Esophagus muscularis mucosa (tissue), 4 donors: ENCODE measurements at regions of chr17 and their contacts with region 1.

Region 1: GRCh38 chr17:32483451-32484019 is 3.3 kb upstream of the CDK5R1 start:
- DNase-seq: no peak
- H3K4me3 ChIP-seq: no peak overlapping the region
- H3K27ac ChIP-seq: peak overlapping the region; percentile 24 to 63 (median 42)
- H3K4me1 ChIP-seq: peaks cover 32 to 48% (median 40%) of the 10 kb centered on the region in 4 donors
- H3K27me3 ChIP-seq: no peaks in the 10 kb centered on the region
- CTCF ChIP-seq: peak; percentile 35 to 61 (median 59)
- EP300 ChIP-seq: no peak
- POLR2A ChIP-seq: no peak

Region 2: DNA sequence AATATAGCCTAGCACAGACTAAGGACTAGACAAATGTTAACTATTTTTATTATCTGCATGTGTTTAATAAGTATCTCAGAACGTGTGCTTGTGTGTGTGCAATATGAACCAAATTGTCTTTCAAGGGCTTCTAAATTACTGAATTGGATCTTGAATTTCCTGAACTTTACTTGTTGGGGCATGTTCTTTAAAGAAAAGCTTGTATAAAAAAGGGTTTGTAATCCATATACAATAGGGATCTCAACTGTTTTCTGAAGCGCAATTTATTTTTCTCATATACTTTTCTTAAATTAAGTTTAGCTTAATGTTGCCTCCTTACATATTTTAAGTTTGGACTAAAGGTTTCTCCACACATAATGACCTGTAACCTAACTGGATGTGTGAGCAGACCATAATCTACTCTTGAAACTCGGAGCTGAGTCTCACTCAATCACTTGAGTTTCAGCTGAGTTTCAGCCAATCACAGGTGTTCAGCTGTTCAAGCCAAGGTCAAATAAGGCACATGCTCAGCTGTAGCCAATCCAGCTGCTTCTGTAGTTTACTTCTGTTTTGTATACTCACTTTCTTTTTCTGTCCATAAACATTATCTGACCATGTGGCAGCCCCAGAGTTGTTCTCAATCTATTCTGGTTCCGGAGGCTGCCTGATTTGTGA is 75.6 kb after region 1 on chr17:
- intact Hi-C with region 1: no loop called
- DNase-seq: no peak
- H3K4me3 ChIP-seq: no peak overlapping the region
- H3K27ac ChIP-seq: no peak overlapping the region
- H3K4me1 ChIP-seq: no peaks in the 10 kb centered on the region
- H3K27me3 ChIP-seq: no peaks in the 10 kb centered on the region
- CTCF ChIP-seq: no peak
- EP300 ChIP-seq: no peak
- POLR2A ChIP-seq: no peak

Region 3: GRCh38 chr17:32755045-32755805 is 271.7 kb after region 1 on chr17:
- intact Hi-C with region 1: loop called (anchors 5 kb)
- DNase-seq: no peak
- H3K4me3 ChIP-seq: no peak overlapping the region
- H3K27ac ChIP-seq: no peak overlapping the region
- H3K4me1 ChIP-seq: no peaks in the 10 kb centered on the region
- H3K27me3 ChIP-seq: no peaks in the 10 kb centered on the region
- CTCF ChIP-seq: peak; percentile 29 to 43 (median 38)
- EP300 ChIP-seq: no peak
- POLR2A ChIP-seq: no peak

Region 4: GRCh38 chr17:32877164-32877764 is 393.7 kb after region 1 on chr17:
- intact Hi-C with region 1: loop called (anchors 5 kb)
- DNase-seq: peak; percentile 94
- H3K4me3 ChIP-seq: peak overlapping the region; percentile 73 to 97 (median 90)
- H3K27ac ChIP-seq: peak overlapping the region; percentile 85 to 92 (median 86)
- H3K4me1 ChIP-seq: peaks cover 11 to 27% (median 23%) of the 10 kb centered on the region in 4 donors
- H3K27me3 ChIP-seq: peaks cover 0 to 3% (median 0%) of the 10 kb centered on the region in 4 donors
- CTCF ChIP-seq: peak; percentile 87 to 98 (median 94)
- EP300 ChIP-seq: no peak
- POLR2A ChIP-seq: no peak